ENCODE measurements at regions of chr12 and their contacts with region 1.

Region 1: DNA sequence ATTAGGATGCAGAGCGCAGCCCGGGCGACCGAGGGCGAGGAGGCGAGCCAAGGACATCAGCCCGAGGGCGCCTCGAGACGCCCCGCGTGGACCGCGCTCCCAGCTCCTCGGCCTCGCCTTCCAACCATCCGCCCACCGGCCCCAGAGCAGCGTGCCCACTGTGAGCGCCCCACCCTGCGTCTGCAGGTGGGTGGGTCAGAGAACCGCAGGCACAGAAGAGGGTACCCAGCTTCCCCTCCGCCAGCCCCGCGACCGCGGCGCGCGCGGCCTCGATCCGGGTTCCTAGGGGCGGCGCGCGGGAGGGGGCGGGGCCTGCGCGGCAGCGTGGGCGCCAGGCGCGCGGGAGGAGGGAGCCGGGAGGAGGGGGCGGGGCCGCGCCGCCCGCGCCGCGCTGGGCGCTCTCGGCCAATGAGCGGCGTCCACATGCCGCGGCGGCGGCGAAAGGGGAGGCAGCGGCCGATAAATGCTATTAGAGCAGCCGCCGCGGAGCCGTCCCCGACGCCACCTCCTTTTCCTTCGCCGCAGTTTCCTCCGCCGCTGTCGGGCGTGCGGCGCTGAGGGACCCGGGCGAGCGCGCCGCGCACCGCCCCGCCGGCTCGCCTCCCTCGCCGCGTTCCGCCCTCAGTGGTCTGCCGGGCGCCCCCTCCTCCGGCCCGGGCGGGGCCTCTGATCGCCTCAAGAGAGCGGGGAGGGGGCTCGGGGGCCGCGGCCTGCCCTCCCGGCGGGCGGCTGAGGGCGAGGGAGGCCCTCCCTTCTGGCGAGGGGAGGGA is at the start of gene ATP2A2:
- DNase-seq: peak; percentile 92
- H3K4me3 Mint-ChIP-seq: peak within 1 kb of the TSS; percentile 82
- H3K27ac Mint-ChIP-seq: peak within 1 kb of the TSS; percentile 85
- H3K4me1 Mint-ChIP-seq: peaks cover 46% of the 10 kb centered on the region
- H3K27me3 Mint-ChIP-seq: peaks cover 8% of the 10 kb centered on the region
- total RNA-seq, gene ATP2A2: 142 TPM

Region 2: DNA sequence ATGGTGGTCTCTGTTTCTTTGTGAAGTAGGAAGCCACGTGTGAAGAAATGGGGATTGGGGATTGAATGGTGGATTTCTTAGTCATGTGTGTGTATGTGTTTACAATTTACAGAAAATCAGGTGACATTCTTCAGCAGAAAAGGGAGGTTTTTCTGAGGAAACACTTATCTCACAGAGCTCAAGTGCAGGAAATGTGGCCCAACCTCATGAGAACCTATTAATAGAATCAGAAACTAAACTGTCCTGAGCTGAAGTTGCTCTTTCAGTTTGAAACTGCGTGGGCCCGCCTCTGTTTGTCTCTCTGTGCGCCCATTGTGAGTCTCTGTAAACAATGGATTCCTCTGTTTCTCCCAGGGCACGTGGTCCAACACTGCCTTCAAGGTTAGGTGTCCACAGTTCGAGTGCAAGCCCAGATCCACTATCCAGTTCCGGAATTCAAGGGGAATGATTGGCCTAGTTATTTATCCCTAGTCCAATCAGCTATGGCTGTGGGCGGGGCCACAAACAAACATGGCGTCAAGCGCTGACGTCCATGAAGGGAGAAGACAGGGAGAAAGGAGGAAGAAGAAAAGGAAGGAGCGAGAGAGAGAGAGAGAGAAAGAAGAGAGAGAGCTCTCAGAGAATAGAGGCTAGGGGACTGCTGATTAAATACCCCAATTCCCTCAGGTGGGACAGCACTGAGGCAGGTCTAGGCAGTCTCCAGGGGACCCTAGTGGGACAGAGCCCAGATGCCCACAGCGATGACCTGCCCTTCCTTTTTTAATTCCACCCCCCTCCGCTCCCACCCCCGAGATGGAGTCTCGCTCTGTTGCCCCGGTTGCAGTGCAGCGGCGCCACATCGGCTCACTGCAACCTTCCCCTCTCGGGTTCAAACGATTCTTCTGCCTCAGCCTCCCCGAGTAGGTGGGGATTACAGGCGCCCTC is 201.2 kb before region 1 on chr12:
- CTCF ChIA-PET with region 1: no interaction called
- POLR2A ChIA-PET with region 1: interaction called, 18 read pairs
- DNase-seq: peak; percentile 87
- H3K4me3 Mint-ChIP-seq: peak overlapping the region; percentile 64
- H3K27ac Mint-ChIP-seq: peak overlapping the region; percentile 98
- H3K4me1 Mint-ChIP-seq: peaks cover 42% of the 10 kb centered on the region
- H3K27me3 Mint-ChIP-seq: peaks cover 1% of the 10 kb centered on the region

Region 3: GRCh38 chr12:110124184-110124995 is 156.6 kb before region 1 on chr12 and contains the start of gene IFT81:
- CTCF ChIA-PET with region 1: interaction called, 4 read pairs
- POLR2A ChIA-PET with region 1: interaction called, 10 read pairs
- DNase-seq: peak; percentile 97
- H3K4me3 Mint-ChIP-seq: peak within 1 kb of the TSS; percentile 89
- H3K27ac Mint-ChIP-seq: peak within 1 kb of the TSS; percentile 62
- H3K4me1 Mint-ChIP-seq: peaks cover 8% of the 10 kb centered on the region
- H3K27me3 Mint-ChIP-seq: peaks cover 36% of the 10 kb centered on the region
- total RNA-seq, gene IFT81: 2.0 to 2.6 TPM

Region 4: GRCh38 chr12:110270125-110270962 is 10.6 kb before region 1 on chr12:
- CTCF ChIA-PET with region 1: interaction called, 3 read pairs
- POLR2A ChIA-PET with region 1: interaction called, 10 read pairs
- DNase-seq: no peak
- H3K4me3 Mint-ChIP-seq: no peak overlapping the region
- H3K27ac Mint-ChIP-seq: no peak overlapping the region
- H3K4me1 Mint-ChIP-seq: no peaks in the 10 kb centered on the region
- H3K27me3 Mint-ChIP-seq: peaks cover 29% of the 10 kb centered on the region

Region 5: GRCh38 chr12:110301065-110301806 is 20.3 kb after region 1 on chr12:
- CTCF ChIA-PET with region 1: no interaction called
- POLR2A ChIA-PET with region 1: interaction called, 41 read pairs
- DNase-seq: no peak
- H3K4me3 Mint-ChIP-seq: no peak overlapping the region
- H3K27ac Mint-ChIP-seq: peak overlapping the region; percentile 65
- H3K4me1 Mint-ChIP-seq: peaks cover 55% of the 10 kb centered on the region
- H3K27me3 Mint-ChIP-seq: no peaks in the 10 kb centered on the region

Region 6: DNA sequence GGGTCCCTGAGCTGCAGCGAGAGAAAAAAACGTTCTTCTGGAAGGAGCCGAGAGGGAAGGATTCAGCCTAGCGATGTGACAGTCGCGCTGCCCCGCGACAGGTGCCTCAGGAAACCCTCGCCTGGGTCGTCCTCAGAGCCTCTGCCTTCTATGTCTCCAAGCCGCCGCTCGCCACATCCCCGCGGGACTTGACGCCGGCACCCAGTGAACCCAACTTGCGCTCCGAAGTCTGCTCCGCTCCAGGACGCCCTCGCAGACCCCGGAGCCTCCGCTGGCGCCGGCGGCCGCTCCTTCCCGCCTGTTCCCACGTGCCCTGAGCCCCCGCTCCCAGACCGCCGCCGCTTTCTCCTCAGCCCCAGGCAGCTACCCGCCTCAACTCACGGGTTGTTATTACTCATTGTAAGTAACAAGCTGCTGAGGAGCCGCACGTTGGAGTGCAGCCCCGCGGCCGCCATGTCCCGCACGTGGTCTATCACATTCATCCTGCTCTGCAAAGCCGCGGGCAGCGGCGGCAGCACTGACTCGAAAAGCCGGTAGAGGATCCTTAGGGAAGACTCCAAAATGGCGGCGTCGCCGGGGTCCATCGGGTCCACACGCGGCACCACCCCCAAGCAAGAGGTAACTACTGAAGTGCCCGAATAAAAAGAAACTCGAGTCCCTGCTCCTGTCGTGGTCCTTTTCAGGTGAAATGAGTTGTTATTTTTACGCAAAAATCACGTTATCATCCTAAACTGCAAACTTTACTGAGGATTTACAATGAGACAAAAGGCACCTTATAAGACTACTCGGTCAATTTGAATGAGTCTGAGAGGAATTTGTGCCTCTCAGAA is 122.4 kb after region 1 on chr12 and contains the start of gene ANAPC7:
- CTCF ChIA-PET with region 1: no interaction called
- POLR2A ChIA-PET with region 1: interaction called, 10 read pairs
- DNase-seq: peak; percentile 87
- H3K4me3 Mint-ChIP-seq: peak within 1 kb of the TSS; percentile 97
- H3K27ac Mint-ChIP-seq: peak within 1 kb of the TSS; percentile 98
- H3K4me1 Mint-ChIP-seq: peaks cover 28% of the 10 kb centered on the region
- H3K27me3 Mint-ChIP-seq: no peaks in the 10 kb centered on the region
- total RNA-seq, gene ANAPC7: 47.2 to 47.3 TPM

Measured in activated CD4-positive, alpha-beta memory T cell treated with anti-CD3 and anti-CD28 coated beads, Interleukin-2, amount 10 ng/mL, durations not matched to agents 7 days and 5 days (primary cell).